ENCODE measurements at regions of chr7 and their contacts with region 1.

Region 1: GRCh38 chr7:92988051-92988450 is 129.7 kb downstream of the SAMD9 start:
- DNase-seq: no peak
- ATAC-seq: peak; percentile 63
- H3K4me3 Mint-ChIP-seq: no peak overlapping the region
- H3K27ac Mint-ChIP-seq: no peak overlapping the region
- H3K4me1 Mint-ChIP-seq: peaks cover 19% of the 10 kb centered on the region
- H3K27me3 Mint-ChIP-seq: no peaks in the 10 kb centered on the region
- CTCF ChIP-seq: no peak

Region 2: GRCh38 chr7:92880212-92881090 is 107.6 kb before region 1 on chr7:
- CTCF ChIA-PET with region 1: interaction called, 19 read pairs
- POLR2A ChIA-PET with region 1: no interaction called
- DNase-seq: peak; percentile 63
- ATAC-seq: peak; percentile 97
- H3K4me3 Mint-ChIP-seq: no peak overlapping the region
- H3K27ac Mint-ChIP-seq: no peak overlapping the region
- H3K4me1 Mint-ChIP-seq: no peaks in the 10 kb centered on the region
- H3K27me3 Mint-ChIP-seq: peaks cover 5% of the 10 kb centered on the region; the same call in 1 of the 2 replicates
- CTCF ChIP-seq: peak; percentile 62; the same call in 1 of the 2 replicates